ENCODE measurements at regions of chr12 and their contacts with region 1.

Region 1: DNA sequence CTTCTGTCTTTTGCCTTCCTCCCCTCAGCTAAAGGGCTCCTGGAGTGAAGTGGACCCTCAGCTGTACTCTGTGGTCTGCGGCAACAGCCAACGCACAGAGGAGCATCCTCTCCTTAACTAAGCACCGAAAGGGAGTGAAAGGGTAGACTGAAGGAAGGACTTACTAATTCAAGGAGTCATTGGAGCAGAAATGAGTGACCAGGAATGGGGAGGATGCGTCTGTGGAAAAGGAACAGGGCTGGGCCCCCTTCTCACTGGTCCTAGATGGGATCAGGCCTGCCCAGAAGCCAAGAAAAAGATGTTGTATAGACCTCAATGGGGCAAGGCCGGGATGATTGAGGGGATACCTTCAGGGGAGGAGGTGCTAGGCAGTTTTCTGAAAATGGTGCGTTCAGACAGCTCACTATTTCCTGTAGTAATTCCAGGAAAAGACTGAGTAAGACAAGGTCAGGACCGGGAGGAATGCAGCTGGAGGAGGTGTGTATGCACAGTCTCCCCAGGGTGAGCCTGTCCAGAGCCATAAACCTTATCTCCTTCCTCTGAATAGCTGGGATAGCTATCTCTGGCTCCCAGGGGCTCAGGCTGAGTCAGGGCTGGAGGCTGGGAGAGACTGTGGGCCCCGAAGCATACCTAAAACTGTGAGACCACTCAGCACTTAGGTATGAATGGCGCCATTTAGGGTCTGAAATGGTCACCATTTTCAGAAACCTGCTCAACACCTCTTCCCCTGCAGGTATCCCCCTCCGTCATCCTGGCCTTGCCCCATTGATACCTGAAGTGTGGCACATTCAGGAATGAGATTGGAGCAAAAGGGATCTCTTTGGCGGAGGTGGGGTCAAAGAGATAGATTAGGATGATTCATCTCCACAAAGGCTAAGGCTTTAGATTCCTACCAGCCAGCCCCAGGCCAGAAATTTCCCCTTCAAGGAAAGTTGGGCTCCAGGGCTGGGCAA is 20.2 kb upstream of the KRT8 start:
- DNase-seq: no peak
- ATAC-seq: peak; percentile 87
- H3K4me3 ChIP-seq: peak overlapping the region in 1 of 2 experiments; percentile 30; a peak in 2 of 4 replicates
- H3K27ac ChIP-seq: peak overlapping the region; percentile 100
- H3K4me1 ChIP-seq: peaks cover 58% of the 10 kb centered on the region
- H3K27me3 ChIP-seq: no peaks in the 10 kb centered on the region
- CTCF ChIP-seq: no peak

Region 2: GRCh38 chr12:52903285-52903854 is 21.7 kb before region 1 on chr12:
- CTCF ChIA-PET with region 1: interaction called, 11 read pairs
- POLR2A ChIA-PET with region 1: interaction called, 16 read pairs
- in situ Hi-C with region 1: no loop called
- intact Hi-C with region 1: no loop called
- DNase-seq: no peak
- ATAC-seq: peak; percentile 44
- H3K4me3 ChIP-seq: peak overlapping the region; percentile 70 to 87
- H3K27ac ChIP-seq: peak overlapping the region; percentile 86
- H3K4me1 ChIP-seq: peaks cover 62% of the 10 kb centered on the region
- H3K27me3 ChIP-seq: no peaks in the 10 kb centered on the region
- CTCF ChIP-seq: no peak